Endothelial cell of umbilical vein (primary cell): ENCODE measurements at regions of chr17 and their contacts with region 1.

Region 1: GRCh38 chr17:15469260-15469659 is 1.8 kb upstream of the CDRT4 start:
- DNase-seq: peak; percentile 72
- H3K4me3 ChIP-seq: no peak overlapping the region
- H3K27ac ChIP-seq: peak overlapping the region; percentile 0
- H3K4me1 ChIP-seq: peaks cover 10% of the 10 kb centered on the region
- H3K27me3 ChIP-seq: no peaks in the 10 kb centered on the region
- CTCF ChIP-seq: no peak
- POLR2A ChIP-seq: no peak

Region 2: GRCh38 chr17:15444805-15445204 is 24.5 kb before region 1 on chr17:
- CTCF ChIA-PET with region 1: no interaction called
- POLR2A ChIA-PET with region 1: no interaction called
- dilution Hi-C with region 1: no loop called
- intact Hi-C with region 1: loop called (anchors 1 kb)
- DNase-seq: peak; percentile 96
- H3K4me3 ChIP-seq: no peak overlapping the region
- H3K27ac ChIP-seq: peak overlapping the region; percentile 92
- H3K4me1 ChIP-seq: peaks cover 51% of the 10 kb centered on the region
- H3K27me3 ChIP-seq: no peaks in the 10 kb centered on the region
- CTCF ChIP-seq: no peak
- POLR2A ChIP-seq: peak; percentile 74